Activated T-helper 1 cell treated with anti-CD3 and anti-CD28 coated beads, Interleukin-12 subunit alpha, Interleukin-12 subunit beta, Interleukin-2, Interleukin-4 antibody, amounts not matched to agents 30 ng/mL and 10 ng/mL and 1 ng/mL, durations not matched to agents 14 hours and 24 hours and 36 hours (primary cell): ENCODE measurements at regions of chr5 and their contacts with region 1.

Region 1: GRCh38 chr5:37722236-37723146 is 117.3 kb downstream of the GDNF start:
- DNase-seq: peak; percentile 53
- H3K4me3 Mint-ChIP-seq: peak overlapping the region; percentile 77
- H3K27ac Mint-ChIP-seq: peak overlapping the region; percentile 95
- H3K4me1 Mint-ChIP-seq: peaks cover 42% of the 10 kb centered on the region
- H3K27me3 Mint-ChIP-seq: no peaks in the 10 kb centered on the region

Region 2: DNA sequence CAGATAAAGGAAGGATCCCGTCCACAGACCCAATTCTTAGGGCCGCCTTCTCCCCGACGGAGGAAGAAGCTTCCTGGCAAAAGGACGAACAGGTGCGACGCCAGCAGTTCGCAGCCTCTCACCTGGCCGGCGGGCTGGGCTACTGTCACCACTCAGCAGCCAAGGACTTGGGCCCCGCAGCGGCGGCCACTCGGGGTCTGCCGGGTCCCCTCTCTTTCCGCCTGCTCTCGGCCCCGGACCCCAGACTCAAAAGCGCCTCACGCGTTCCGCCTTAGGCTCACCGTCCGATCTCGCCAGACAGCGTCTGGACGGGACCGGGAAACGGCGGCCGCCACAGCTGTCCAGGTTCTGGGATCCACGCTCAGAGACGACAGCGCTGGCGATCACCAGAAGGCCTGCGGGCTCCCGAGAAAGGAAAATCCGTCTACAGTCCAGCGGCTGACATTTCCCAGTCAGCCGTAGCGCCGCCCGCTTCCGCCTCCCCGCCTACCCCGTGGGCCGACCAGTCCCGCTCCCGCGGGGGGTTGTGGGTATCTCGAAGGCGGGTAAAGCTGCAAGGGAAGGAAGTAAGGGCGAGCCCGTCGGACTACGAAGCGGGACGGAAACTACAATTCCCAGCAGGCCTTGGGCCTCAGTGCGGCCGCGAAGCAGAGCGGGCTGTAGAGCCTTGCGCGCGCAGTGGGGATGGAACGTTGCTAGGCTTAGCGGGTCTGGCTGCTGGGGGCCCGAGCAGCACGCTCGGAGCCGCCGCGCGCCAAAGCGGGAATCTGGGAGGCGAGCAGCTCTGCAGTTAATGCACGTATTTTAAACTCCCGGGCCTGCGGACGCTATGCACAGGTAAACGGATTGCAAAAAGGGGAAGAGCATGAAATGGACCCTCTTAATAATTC is 1570.8 kb before region 1 on chr5 and contains the starts of genes LMBRD2 and SKP2:
- intact Hi-C with region 1: loop called (anchors 5 kb)
- DNase-seq: peak; percentile 97
- H3K4me3 Mint-ChIP-seq: peak within 1 kb of the TSS; percentile 97
- H3K27ac Mint-ChIP-seq: peak within 1 kb of the TSS; percentile 79
- H3K4me1 Mint-ChIP-seq: peaks cover 59% of the 10 kb centered on the region
- H3K27me3 Mint-ChIP-seq: no peaks in the 10 kb centered on the region
- total RNA-seq, gene LMBRD2: 8.9 and 12.3 TPM in 2 replicates
- total RNA-seq, gene SKP2: 54.6 and 61.2 TPM in 2 replicates

Region 3: DNA sequence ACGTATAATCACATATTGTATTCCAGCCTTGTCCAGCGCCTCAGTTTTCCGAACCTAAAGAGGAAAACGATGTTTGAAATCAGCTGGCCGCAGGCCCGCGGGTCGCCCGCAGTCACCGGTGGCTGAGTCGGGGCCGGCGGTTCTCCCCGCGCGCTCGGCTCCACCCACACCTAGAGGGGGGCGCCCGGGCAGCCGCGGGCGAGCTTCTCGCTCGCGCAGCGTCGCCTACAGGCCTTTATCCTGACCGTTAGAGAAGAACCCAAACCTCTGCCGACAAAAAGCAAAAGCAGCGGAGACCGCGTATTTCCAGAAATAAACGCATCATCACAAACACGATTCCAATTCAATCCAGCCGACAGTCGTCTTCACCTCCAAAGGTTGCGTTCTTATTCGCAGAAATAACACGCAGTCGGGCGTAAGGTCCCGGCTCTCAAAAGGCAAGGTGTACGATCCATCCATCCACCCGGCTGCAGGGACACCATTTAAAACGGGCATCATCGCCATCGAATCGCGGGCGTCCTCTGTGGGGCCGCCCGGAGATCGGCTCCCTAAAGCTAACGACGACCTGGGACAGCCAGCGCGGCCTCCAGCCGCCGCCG is 846.6 kb before region 1 on chr5:
- intact Hi-C with region 1: loop called (anchors 5 kb)
- DNase-seq: peak; percentile 72
- H3K4me3 Mint-ChIP-seq: peak overlapping the region; percentile 93
- H3K27ac Mint-ChIP-seq: peak overlapping the region; percentile 97
- H3K4me1 Mint-ChIP-seq: peaks cover 55% of the 10 kb centered on the region
- H3K27me3 Mint-ChIP-seq: peaks cover 2% of the 10 kb centered on the region

Region 4: DNA sequence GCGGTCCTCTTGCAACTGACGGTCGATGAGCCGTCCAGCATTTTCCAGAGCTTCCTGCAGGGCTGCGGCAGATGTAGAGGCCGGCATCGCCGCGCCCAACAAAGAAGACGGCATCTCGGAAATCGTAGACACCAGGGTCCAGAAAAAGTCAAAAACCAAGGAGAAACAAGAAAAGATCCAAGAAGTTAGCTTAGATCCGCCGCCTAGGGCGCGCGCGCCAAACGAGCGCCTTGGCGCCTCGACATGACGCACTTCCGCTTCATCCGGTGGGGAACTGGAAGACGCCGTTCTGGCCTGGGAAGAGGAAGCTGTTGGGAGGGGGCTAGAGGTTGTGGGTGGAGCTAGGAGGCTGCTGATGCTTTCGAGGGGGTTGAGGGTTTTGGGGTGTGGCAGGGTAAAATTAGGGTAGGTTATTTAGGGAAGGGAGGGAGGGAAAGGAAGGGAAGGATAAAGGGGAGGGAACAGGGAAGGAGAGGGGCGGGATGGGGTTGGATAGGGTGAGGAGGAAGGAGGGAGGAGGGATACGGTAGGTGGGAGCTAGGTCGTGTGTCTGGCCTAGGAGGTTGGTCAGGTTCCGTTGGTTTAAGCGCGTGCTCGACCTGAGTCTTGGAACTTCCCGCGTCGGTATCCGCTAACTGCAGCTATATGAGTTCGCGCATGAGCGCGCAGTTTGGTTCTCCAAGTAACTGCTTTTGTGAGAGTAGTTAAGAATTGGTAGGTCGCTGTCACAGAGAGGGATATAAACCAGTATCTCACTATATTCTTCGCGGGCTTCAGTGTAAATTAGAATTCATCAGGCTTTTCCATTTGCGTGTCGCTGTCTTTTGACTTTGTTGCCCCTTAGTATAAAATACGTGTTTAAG is 351.4 kb before region 1 on chr5 and contains the start of gene NUP155:
- intact Hi-C with region 1: loop called (anchors 1 kb)
- DNase-seq: peak; percentile 87
- H3K4me3 Mint-ChIP-seq: peak within 1 kb of the TSS; percentile 94
- H3K27ac Mint-ChIP-seq: peak within 1 kb of the TSS; percentile 97
- H3K4me1 Mint-ChIP-seq: peaks cover 37% of the 10 kb centered on the region
- H3K27me3 Mint-ChIP-seq: no peaks in the 10 kb centered on the region
- total RNA-seq, gene NUP155: 72.5 and 82.1 TPM in 2 replicates

Region 5: DNA sequence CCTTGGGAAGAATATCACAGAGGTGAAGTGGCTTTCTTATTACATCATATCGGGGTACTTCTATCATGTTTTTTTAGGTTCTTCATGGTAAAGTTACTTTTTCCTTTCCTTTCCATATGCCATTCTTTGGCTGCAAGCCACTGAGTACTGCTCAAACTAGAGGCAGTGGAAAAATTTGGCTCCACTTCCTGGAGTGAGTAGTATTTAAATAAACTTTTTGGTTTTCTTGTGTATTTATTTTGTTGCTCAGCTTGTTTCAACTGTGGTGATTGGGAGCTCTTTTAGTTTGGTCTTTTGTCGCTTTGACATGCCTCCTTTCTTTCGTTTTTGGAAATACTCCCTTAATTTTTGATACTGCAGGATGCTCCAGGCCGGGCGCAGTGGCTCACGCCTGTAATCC is 273.6 kb before region 1 on chr5:
- intact Hi-C with region 1: loop called (anchors 1 kb)
- DNase-seq: no peak
- H3K4me3 Mint-ChIP-seq: no peak overlapping the region
- H3K27ac Mint-ChIP-seq: no peak overlapping the region
- H3K4me1 Mint-ChIP-seq: no peaks in the 10 kb centered on the region
- H3K27me3 Mint-ChIP-seq: no peaks in the 10 kb centered on the region

Region 6: DNA sequence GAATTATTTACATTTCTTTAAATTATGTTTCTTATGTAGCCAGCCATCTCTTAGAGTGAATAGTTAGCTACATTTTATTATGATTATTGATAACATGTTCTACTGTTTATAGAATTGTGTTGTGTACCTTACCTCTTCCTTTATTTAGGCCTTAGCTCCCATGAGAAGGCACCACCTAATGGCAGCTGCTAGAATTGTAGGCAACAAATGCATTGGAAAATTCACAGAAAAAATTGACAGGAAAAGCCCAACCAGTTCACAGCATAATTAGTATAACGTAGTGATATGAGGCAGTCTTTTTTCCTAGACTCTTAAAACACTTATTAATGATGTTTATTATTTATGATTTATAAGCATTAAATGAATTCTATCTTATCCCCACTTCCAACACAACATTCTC is 167.6 kb before region 1 on chr5:
- intact Hi-C with region 1: no loop called
- DNase-seq: no peak
- H3K4me3 Mint-ChIP-seq: no peak overlapping the region
- H3K27ac Mint-ChIP-seq: no peak overlapping the region
- H3K4me1 Mint-ChIP-seq: no peaks in the 10 kb centered on the region
- H3K27me3 Mint-ChIP-seq: no peaks in the 10 kb centered on the region

Region 7: DNA sequence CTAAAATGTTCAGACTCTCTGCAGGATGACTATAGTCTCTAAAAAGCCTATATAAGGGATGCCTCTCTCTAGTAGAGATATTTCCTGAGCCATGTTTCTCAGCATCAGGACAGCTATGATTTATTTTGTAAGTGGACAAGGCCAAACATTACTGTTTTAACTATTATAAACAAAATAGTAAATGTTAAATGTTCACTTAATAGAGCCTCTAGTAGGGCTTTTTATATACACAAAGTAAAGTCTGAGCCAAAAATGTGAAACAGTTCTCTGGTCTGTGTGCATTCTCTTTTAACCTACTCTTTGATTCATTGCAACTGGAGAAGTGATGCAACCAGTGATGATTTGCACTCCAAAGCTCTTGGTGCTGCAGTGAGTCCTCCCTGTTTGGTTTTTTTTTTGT is 103.1 kb before region 1 on chr5:
- intact Hi-C with region 1: no loop called
- DNase-seq: no peak
- H3K4me3 Mint-ChIP-seq: no peak overlapping the region
- H3K27ac Mint-ChIP-seq: no peak overlapping the region
- H3K4me1 Mint-ChIP-seq: no peaks in the 10 kb centered on the region
- H3K27me3 Mint-ChIP-seq: no peaks in the 10 kb centered on the region

Region 8: DNA sequence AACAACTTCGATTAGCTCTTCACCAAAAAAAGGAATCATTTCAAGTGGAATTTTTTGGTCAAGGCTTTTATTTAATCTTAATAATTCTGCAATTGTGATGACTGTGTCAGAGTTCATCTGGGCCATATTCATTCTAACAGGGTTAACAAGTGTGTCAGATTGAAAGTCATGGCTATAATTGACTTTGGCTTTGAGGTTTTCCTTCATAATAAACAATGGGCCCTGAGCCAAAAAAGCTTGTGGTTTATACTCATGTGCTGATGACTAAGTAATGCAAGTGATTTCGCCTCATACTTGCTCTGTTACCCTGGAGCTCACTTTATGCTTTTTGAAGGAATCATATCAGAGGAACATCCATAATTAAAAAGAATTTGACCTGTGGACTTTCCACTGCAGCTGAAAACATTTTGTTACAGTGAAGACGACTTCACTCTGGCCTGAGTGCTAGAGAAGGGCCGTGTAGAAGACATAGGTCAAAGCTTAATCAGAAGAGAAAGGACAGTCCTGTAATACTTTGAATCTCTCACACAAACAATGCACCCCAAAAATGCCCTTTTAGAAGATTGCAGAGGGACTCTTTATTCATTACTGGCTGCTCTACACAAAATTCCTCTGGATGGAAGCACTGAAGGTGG is 15.7 kb after region 1 on chr5:
- intact Hi-C with region 1: loop called (anchors 1 kb)
- DNase-seq: peak; percentile 4
- H3K4me3 Mint-ChIP-seq: peak overlapping the region; percentile 51
- H3K27ac Mint-ChIP-seq: peak overlapping the region; percentile 81
- H3K4me1 Mint-ChIP-seq: peaks cover 35% of the 10 kb centered on the region
- H3K27me3 Mint-ChIP-seq: no peaks in the 10 kb centered on the region

Region 9: GRCh38 chr5:38453506-38453905 is 731.0 kb after region 1 on chr5:
- intact Hi-C with region 1: loop called (anchors 10 kb)
- DNase-seq: peak; percentile 65
- H3K4me3 Mint-ChIP-seq: peak overlapping the region; percentile 35
- H3K27ac Mint-ChIP-seq: peak overlapping the region; percentile 66
- H3K4me1 Mint-ChIP-seq: peaks cover 22% of the 10 kb centered on the region
- H3K27me3 Mint-ChIP-seq: peaks cover 83% of the 10 kb centered on the region